ENCODE measurements at regions of chrX and their contacts with region 1.

Region 1: DNA sequence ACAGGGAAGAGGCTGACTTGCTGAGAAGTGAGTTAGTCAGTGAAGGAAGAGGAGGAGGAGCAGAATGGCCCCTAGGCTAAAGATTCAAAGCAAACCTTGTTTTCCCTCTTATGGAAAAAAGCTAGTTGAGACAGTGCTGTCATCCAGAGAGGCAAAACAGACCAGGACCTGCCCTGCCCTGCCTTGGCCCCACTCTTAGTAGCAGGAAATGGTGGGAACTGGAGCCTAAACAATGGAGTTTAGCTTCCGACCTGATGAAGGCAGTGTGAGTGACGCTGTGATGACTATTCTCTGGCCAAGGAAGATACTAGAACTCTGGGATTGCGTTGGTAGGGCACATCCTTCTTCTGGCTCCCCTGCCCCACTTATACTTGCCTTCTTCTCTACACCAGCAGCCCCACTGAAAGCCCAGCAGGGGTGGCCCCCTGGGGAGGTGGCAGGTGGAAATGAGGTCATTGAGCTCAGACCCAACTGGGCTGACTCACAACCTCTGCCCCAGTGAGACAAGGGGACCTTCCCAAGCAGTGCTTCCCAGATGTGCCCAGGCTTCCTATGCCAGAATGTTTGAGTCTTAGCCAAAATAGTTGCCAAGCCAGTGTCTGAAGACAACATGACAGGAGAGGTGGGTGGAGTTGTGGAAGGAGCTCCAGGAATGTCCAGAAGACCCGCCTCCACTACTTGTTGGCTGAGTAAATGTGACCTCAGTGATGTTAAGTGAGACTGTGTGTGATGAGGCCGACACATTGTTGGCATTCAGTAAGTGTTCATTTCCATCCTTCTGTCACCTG is 38.8 kb downstream of the MSN start:
- DNase-seq: peak; percentile 76
- H3K4me3 ChIP-seq: no peak overlapping the region
- H3K27ac ChIP-seq: peak overlapping the region; percentile 89
- H3K4me1 ChIP-seq: peaks cover 55% of the 10 kb centered on the region
- H3K27me3 ChIP-seq: no peaks in the 10 kb centered on the region
- CTCF ChIP-seq: no peak
- POLR2A ChIP-seq: no peak

Region 2: DNA sequence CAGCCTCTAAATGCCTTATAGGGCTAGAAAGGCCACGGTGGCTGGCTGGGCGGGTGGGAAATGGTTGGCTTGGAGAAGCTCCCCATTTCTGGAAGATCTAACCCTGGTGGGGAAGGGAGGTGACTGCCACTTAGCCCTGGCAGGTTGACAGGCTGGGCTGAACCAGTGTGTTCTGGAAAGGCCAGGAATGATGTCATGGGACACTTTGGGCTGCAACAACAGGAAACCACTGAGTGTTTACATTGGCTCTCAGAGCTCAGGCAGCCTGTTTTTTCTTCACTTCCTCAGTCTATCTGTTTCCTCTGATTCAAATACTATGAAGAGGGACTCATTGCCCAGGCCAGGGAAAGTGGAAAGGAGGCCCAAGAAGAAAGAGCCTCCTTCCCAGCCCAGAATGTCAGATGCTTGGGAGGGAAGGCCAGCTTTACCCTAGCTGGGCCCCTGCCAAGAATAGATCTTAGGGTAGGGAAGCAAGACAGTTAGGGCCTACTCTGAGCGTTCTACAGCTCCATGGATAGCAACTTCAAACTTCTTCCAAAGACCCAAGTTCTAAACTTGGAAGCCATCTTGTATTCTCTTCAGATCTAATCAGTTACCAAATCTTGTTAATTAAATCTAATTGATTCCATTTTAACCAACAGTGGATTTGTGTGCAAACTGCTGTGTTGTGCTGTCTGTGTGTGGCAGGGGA is 104.6 kb before region 1 on chrX:
- CTCF ChIA-PET with region 1: interaction called, 15 read pairs
- POLR2A ChIA-PET with region 1: interaction called, 5 read pairs
- dilution Hi-C with region 1: no loop called
- intact Hi-C with region 1: loop called (anchors 1 kb)
- DNase-seq: peak; percentile 97
- H3K4me3 ChIP-seq: no peak overlapping the region
- H3K27ac ChIP-seq: peak overlapping the region; percentile 96
- H3K4me1 ChIP-seq: peaks cover 44% of the 10 kb centered on the region
- H3K27me3 ChIP-seq: no peaks in the 10 kb centered on the region
- CTCF ChIP-seq: no peak
- POLR2A ChIP-seq: peak; percentile 41

Region 3: GRCh38 chrX:65667503-65668376 is 38.5 kb before region 1 on chrX and contains the start of gene MSN:
- CTCF ChIA-PET with region 1: interaction called, 18 read pairs
- POLR2A ChIA-PET with region 1: interaction called, 8 read pairs
- dilution Hi-C with region 1: no loop called
- intact Hi-C with region 1: loop called (anchors 1 kb)
- DNase-seq: peak; percentile 52
- H3K4me3 ChIP-seq: peak within 1 kb of the TSS; percentile 81 to 93 (median 87)
- H3K27ac ChIP-seq: peak within 1 kb of the TSS; percentile 94
- H3K4me1 ChIP-seq: peaks cover 19% of the 10 kb centered on the region
- H3K27me3 ChIP-seq: no peaks in the 10 kb centered on the region
- CTCF ChIP-seq: peak in 1 of 2 donors; percentile 30
- POLR2A ChIP-seq: peak; percentile 76
- total RNA-seq, gene MSN: 635 and 658 TPM in 2 replicates

Region 4: GRCh38 chrX:65686236-65686635 is 20.0 kb before region 1 on chrX:
- CTCF ChIA-PET with region 1: interaction called, 20 read pairs
- POLR2A ChIA-PET with region 1: interaction called, 3 read pairs
- dilution Hi-C with region 1: no loop called
- intact Hi-C with region 1: no loop called
- DNase-seq: peak; percentile 41
- H3K4me3 ChIP-seq: no peak overlapping the region
- H3K27ac ChIP-seq: peak overlapping the region; percentile 7
- H3K4me1 ChIP-seq: peaks cover 66% of the 10 kb centered on the region
- H3K27me3 ChIP-seq: no peaks in the 10 kb centered on the region
- CTCF ChIP-seq: no peak
- POLR2A ChIP-seq: no peak

Measured in endothelial cell of umbilical vein (primary cell).